ENCODE measurements at regions of chr9 and their contacts with region 1.

Region 1: DNA sequence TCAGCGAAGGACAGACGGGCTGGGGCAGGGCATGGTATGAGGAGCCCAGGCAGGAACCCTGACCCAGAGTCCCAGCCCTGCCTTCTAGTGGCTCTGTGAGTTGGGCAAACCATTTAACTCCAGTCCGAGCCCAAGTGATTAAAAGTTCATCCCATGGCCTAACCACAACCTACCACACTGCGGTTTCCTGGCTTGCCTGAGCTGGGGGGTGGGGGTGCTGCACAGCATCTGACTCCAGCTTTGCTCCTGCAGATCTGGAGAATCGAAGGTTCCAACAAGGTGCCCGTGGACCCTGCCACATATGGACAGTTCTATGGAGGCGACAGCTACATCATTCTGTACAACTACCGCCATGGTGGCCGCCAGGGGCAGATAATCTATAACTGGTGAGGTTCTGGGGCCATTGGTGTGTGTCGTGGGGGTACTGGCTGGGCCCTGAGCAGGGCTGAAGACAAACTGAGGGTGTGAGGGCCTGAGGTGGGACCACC is 49.0 kb downstream of the STOM start:
- DNase-seq: no peak
- H3K27ac ChIP-seq: peak overlapping the region; percentile 68
- CTCF ChIP-seq: no peak

Region 2: DNA sequence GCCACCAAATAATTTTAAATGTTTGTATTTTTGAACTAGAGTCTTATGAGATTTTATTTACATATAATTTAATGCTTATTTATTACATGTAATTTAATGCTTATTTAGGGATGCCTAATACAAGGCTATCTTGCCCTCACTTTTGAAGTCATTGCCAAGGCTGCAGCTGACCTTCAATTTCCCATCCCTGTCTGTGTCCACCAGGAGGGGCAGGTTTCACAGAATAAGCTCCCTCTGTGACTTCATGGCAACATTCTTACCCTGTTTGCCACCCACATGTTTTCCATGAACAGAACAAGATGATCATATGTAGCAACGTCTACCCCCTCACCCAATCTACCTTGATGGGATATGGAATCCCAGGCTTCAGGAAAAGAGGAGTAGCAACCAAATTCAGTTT is 298.0 kb before region 1 on chr9:
- CTCF ChIA-PET with region 1: no interaction called
- POLR2A ChIA-PET with region 1: no interaction called
- DNase-seq: peak; percentile 9
- H3K27ac ChIP-seq: no peak overlapping the region
- CTCF ChIP-seq: no peak

Region 3: DNA sequence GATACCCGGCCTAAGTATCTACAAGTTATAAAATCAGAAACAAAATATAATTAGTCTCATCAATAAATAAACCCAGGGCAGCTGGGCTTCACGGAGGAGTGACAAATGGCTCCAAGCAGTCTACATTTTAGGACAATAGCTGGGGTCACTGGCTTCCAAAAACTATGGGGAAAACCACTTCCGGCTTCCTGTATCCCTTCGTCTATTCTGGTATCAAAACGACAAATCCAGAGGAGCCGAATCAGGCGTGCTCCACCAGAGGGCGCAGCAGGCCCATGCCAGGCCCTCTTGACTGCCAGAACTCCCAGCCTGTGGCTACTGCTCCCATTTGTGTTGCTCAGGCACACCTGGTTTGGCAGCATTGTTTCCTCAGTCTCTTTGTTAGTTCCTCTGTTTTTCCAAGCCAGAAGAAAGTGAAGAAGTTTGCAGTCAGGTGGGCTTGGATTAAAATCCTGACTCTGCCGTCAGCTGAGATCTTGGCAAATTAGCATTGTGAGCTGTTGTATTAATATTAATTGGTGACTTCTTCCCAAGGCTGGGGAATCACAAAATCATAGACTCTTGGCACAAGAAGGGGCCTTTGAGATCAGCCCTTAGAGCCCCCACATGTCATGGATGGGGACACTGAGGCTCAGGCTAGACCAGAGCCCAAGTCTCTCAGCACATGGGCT is 107.8 kb before region 1 on chr9:
- CTCF ChIA-PET with region 1: interaction called, 30 read pairs
- POLR2A ChIA-PET with region 1: interaction called, 8 read pairs
- DNase-seq: peak; percentile 93
- H3K27ac ChIP-seq: peak overlapping the region; percentile 27; the same call in 1 of the 2 replicates
- CTCF ChIP-seq: peak; percentile 99

Region 4: DNA sequence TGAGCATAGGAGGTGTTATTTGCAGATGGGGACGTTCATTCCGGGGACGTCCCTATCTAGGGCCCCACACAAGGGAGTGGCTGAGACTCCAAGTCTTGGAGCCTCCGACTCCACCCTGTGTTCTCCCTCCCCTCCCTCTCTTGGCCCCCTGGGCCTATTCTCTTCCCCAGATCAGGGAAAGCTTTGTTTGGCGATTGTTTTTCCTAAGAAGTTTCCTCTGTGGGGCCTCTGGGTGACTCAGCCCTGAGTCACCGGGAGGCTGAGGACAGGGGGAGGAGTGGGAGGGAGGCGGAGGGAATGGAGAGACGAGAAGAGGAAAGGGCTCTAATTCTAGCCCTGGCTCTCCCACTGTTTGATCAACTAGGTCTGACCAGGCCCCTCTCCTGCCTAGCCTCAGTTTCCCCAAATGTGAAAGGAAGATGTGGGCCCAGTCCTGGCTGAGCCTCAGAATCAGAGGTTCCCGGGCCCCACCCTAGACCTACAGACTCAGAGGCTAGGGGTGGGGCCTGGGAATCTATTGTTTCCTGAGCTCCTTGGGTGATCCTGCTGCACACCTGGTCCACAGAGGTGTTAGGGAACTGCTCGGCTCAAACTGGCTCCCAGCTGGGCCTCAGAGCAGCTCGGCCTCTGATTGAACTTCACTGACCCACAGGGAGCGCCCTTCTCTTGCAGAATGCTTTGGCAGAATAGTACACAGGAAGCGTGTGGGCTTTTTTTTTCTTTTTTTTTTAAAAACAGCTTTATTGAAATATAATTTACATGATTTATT is 33.9 kb before region 1 on chr9:
- CTCF ChIA-PET with region 1: interaction called, 11 read pairs
- POLR2A ChIA-PET with region 1: no interaction called
- DNase-seq: peak; percentile 99
- H3K27ac ChIP-seq: peak overlapping the region; percentile 99
- CTCF ChIP-seq: no peak; the same call in 1 of the 2 replicates

Region 5: GRCh38 chr9:121350993-121351561 is 30.0 kb after region 1 on chr9:
- CTCF ChIA-PET with region 1: interaction called, 10 read pairs
- POLR2A ChIA-PET with region 1: no interaction called
- DNase-seq: peak; percentile 52
- H3K27ac ChIP-seq: no peak overlapping the region
- CTCF ChIP-seq: no peak

Region 6: DNA sequence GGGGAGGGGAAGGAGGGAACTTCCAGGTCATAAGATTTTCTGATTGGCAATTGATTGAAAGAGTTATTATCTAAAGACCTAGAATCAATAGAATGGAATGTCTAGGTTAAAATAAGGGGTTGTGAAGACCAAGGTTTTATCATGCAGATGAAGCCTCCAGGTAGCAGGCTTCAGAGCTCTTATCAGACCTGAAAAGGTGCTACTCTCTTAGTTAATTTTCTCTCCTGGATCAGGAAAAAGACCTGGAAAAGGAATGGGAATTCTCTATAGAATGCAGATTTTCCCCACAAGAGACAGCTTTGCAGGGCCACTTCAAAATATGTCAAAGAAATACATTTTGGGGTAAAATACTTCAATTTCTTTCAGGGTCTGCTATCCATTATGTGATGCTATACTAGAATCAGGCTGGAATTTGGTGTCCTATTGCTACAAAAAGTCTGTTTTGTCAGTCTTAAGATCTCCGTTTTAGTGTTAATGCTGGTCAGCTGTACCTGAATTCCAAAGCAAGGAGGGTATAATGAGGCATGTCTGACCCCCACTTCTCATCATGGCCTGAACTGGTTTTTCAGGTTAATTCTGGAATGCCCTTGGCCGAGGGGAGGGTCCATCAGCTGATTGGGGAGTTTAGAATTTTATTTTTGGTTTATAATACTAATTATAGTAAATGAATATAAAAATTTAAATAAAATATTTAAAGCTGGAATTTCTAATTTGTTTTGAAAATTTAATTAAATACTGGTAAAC is 65.6 kb after region 1 on chr9:
- CTCF ChIA-PET with region 1: interaction called, 11 read pairs
- POLR2A ChIA-PET with region 1: no interaction called
- DNase-seq: no peak
- H3K27ac ChIP-seq: no peak overlapping the region
- CTCF ChIP-seq: no peak

Region 7: GRCh38 chr9:121478816-121479676 is 158.0 kb after region 1 on chr9:
- CTCF ChIA-PET with region 1: no interaction called
- POLR2A ChIA-PET with region 1: no interaction called
- DNase-seq: no peak
- H3K27ac ChIP-seq: no peak overlapping the region
- CTCF ChIP-seq: no peak